CD14-positive monocyte (primary cell): ENCODE measurements at regions of chr6 and their contacts with region 1.

Region 1: GRCh38 chr6:37791156-37791919 is 28.2 kb upstream of the ZFAND3 start:
- DNase-seq: peak; percentile 93 to 97 (median 95)
- H3K4me3 ChIP-seq: no peak overlapping the region
- H3K4me3 Mint-ChIP-seq: no peak overlapping the region
- H3K27ac ChIP-seq: no peak overlapping the region
- H3K27ac Mint-ChIP-seq: peak overlapping the region in 6 of 7 donors; percentile 66 to 93 (median 80)
- H3K4me1 ChIP-seq: peaks cover 7 to 10% of the 10 kb centered on the region in 2 donors
- H3K4me1 Mint-ChIP-seq: peaks cover 14% of the 10 kb centered on the region
- H3K27me3 ChIP-seq: no peaks in the 10 kb centered on the region
- H3K27me3 Mint-ChIP-seq: peaks cover 4 to 9% (median 8%) of the 10 kb centered on the region in 3 donors
- CTCF ChIP-seq: peak; percentile 94

Region 2: DNA sequence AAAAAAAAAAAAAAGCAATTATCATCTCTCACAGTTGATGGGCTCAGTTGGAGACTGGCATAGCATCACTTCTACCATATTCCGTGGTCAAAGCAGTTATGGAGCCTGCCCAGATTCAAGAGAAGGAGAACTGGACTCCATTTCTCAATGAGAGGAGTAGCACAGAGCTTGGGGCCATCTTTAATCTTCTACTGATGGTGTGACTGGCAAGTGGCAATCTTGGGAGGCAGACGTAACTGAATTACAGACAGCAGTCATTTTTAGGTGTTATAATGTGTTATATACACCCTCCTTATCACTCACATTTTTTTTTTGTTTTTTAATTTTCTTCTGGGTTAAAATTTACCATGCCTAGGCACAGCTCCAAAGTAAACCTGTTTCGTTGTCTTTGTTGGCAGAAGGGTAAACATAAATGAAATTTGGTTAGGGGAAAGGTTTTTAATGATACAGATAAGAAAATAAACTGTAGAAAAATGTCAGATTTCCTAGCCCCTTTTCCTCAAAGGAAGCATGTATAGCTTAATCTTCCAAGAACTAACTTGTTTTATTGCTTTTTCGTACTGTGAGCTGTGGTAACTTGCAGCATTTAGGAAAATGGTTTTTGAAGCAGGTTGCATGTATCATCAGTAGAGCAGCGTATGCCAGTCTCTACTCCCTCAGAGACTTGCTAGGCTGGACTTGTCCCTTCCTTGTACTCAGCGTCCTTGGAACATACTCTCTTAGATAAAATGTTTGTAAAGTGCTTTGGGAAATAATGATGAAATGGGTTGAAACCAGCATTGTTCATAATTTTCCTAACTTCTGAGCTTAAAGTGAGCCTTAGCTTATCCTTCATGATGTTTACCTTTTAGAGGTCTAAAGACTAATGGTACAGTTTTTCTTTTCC is 53.9 kb after region 1 on chr6:
- intact Hi-C with region 1: loop called in 1 of 2 experiments (anchors 5 kb)
- DNase-seq: no peak
- H3K4me3 ChIP-seq: no peak overlapping the region
- H3K4me3 Mint-ChIP-seq: no peak overlapping the region
- H3K27ac ChIP-seq: no peak overlapping the region
- H3K27ac Mint-ChIP-seq: peak overlapping the region in 4 of 7 donors; percentile 13 to 59 (median 36)
- H3K4me1 ChIP-seq: peaks cover 4 to 13% of the 10 kb centered on the region in 2 donors
- H3K4me1 Mint-ChIP-seq: peaks cover 36% of the 10 kb centered on the region
- H3K27me3 ChIP-seq: no peaks in the 10 kb centered on the region
- H3K27me3 Mint-ChIP-seq: no peaks in the 10 kb centered on the region
- CTCF ChIP-seq: no peak

Region 3: GRCh38 chr6:37868447-37868825 is 77.1 kb after region 1 on chr6:
- intact Hi-C with region 1: loop called in 1 of 2 experiments (anchors 5 kb)
- DNase-seq: no peak
- H3K4me3 ChIP-seq: no peak overlapping the region
- H3K4me3 Mint-ChIP-seq: no peak overlapping the region
- H3K27ac ChIP-seq: peak overlapping the region in 1 of 2 donors; percentile 58
- H3K27ac Mint-ChIP-seq: peak overlapping the region; percentile 14 to 85 (median 74)
- H3K4me1 ChIP-seq: peaks cover 48 to 61% of the 10 kb centered on the region in 2 donors
- H3K4me1 Mint-ChIP-seq: peaks cover 67% of the 10 kb centered on the region
- H3K27me3 ChIP-seq: no peaks in the 10 kb centered on the region
- H3K27me3 Mint-ChIP-seq: peaks cover 0 to 1% (median 0%) of the 10 kb centered on the region in 3 donors
- CTCF ChIP-seq: no peak